ENCODE measurements at regions of chr10 and their contacts with region 1.

Region 1: DNA sequence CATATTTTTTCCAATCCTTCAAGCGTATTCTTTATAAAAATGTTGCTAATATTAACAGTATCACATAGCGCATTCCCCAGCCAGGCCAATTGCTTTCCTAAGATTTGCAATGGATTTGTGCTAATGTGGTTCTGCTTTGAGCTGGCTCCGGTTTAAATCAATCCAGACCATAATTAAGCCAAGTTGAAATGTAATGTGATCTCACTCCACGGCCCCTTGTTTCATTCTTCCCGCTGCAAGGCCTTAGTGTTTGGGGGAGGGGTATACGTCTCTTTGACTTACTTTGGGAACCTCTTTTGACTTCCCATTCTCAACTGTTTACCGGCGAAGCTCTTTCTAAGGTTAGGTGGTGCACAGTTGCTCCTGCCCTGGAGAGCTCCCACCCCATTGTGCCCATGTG is 86.4 kb downstream of the PRPF18 start:
- DNase-seq: no peak
- ATAC-seq: no peak
- H3K4me3 ChIP-seq: no peak overlapping the region
- H3K4me3 Mint-ChIP-seq: no peak overlapping the region
- H3K27ac ChIP-seq: no peak overlapping the region
- H3K27ac Mint-ChIP-seq: no peak overlapping the region
- H3K4me1 ChIP-seq: no peaks in the 10 kb centered on the region
- H3K4me1 Mint-ChIP-seq: no peaks in the 10 kb centered on the region
- H3K27me3 ChIP-seq: peaks cover 0 to 2% of the 10 kb centered on the region in 2 experiments
- H3K27me3 Mint-ChIP-seq: peaks cover 0 to 4% of the 10 kb centered on the region in 2 donors

Region 2: DNA sequence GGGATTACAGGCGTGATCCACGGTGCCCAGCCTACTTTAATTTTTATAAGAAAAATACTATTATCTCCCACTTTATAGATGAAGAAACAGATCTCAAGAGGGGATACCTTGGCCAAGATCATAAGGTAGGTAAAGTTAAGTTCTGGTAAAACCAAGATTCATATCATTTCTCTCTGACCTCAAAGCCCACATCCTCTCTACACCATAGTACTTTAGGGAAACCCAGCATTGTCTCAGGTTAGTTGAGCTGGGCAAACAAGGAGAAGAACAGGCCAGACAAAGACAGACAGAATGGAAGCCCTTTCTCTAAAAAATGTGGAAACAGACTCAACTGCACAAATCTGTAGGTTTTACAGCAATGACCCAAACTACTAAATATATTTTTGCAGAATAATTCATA is 855.3 kb after region 1 on chr10:
- CTCF ChIA-PET with region 1: no interaction called
- POLR2A ChIA-PET with region 1: interaction called in 1 of 2 experiments, 12 read pairs
- DNase-seq: peak in 1 of 35 experiments; percentile 64
- ATAC-seq: peak; percentile 82 to 94 (median 88)
- H3K4me3 ChIP-seq: no peak overlapping the region
- H3K4me3 Mint-ChIP-seq: peak overlapping the region; percentile 23 to 59 (median 31)
- H3K27ac ChIP-seq: peak overlapping the region; percentile 4
- H3K27ac Mint-ChIP-seq: peak overlapping the region; percentile 19 to 44
- H3K4me1 ChIP-seq: peaks cover 30 to 53% of the 10 kb centered on the region in 2 experiments
- H3K4me1 Mint-ChIP-seq: peaks cover 82 to 89% (median 86%) of the 10 kb centered on the region in 3 donors
- H3K27me3 ChIP-seq: no peaks in the 10 kb centered on the region
- H3K27me3 Mint-ChIP-seq: no peaks in the 10 kb centered on the region